ENCODE measurements at regions of chr4 and their contacts with region 1.

Region 1: DNA sequence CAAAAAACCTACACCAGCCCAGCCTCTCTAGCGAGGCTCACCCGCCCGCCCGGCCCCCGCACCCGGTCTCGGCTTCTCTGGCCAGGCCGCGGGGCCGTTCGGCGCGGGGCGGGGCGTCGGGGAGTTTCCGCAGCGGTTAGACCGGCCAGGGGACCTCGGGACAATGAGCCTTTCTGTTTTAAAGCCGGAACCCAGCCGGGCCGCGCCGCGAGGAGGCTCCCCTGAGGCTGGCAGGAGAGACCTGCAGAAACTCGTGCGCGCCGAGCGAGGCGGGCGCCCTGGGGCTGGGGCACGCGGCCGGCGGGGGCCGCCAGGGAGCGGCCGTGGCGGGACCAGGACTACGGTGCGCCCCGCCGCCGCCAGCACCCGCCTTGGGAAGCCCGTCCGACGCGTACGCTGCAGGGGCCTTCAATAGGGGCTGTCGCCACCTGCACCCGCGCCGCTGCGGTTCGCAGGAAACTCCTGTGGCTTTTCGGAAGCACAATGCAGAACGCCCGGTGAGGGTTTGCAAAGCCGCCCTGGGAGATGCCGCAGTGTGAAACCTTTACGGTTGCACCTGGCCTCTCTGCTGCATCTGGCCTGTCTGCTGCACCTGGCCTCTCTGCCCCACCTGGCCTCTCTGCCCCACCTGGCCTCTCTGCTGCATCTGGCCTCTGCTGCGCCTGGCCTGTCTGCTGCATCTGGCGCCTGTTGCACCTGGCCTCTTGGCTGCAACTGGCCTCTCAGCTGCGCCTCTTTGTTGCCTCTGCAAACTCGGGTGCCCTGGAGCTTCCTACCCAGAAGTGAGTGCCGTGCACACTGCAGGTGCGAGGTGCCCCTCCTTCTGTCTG is 63.9 kb downstream of the TRAPPC11 start:
- DNase-seq: peak; percentile 76
- ATAC-seq: peak; percentile 77

Region 2: DNA sequence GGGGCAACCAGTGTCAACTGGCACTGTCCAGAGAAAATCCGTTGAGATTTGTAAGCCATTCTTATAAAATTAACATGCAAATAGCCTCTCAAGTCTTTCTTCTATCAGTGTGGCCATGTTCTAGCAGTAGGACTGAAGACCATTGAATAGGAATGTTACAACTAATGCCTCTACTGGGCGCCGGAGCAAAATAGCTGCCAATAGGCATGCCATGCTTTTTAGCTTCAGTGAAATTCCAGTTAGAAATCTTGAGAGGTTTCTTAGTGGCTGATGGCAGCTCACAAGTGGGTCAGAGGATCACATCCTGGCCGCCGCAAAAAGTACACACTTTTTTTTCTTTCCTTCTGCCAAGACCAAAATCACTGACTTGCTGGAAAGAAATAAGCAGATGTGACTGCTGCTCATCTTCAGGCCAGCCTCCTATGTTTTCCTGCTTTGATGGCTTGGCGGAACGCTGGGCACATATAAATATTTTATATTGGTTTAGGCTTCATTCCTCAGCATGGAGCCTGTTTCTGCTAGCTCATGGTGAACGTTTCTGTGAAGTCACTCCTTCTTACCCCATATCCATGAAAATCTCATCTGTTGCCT is 1186.6 kb before region 1 on chr4:
- intact Hi-C with region 1: loop called (anchors 5 kb)
- DNase-seq: no peak
- ATAC-seq: no peak

Region 3: GRCh38 chr4:183633476-183634400 is 89.2 kb before region 1 on chr4:
- intact Hi-C with region 1: no loop called
- DNase-seq: no peak
- ATAC-seq: no peak

Region 4: GRCh38 chr4:183823434-183823833 is 100.5 kb after region 1 on chr4:
- intact Hi-C with region 1: loop called (anchors 10 kb)
- DNase-seq: no peak
- ATAC-seq: peak; percentile 66

Region 5: DNA sequence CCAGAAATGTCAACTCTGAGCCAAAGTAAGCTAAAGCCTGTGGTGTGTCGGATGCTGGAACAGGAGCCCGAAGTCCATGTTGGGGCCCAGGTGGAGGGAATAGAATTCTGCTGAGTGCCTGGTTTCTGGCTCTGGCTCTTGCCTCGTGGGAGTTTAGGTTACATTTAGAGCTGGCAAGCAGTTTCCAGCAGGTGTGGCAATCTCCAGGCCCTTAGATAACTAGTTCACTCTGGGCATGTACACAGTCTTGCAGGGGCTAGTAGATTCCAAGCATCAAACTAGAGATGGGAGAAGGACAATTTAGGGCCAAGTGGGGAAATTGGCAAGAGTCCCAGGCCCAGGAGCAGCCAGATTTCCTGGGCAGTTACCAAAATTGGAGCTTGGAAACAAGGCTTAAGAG is 125.9 kb after region 1 on chr4:
- intact Hi-C with region 1: no loop called
- DNase-seq: no peak
- ATAC-seq: no peak

Region 6: GRCh38 chr4:184168406-184169019 is 445.6 kb after region 1 on chr4:
- intact Hi-C with region 1: loop called (anchors 10 kb)
- DNase-seq: peak; percentile 87
- ATAC-seq: peak; percentile 98